AG04450 (cell line): ENCODE measurements at regions of chr14 and their contacts with region 1.

Region 1: GRCh38 chr14:24299255-24300195 is at the starts of genes DHRS1 and NOP9:
- DNase-seq: peak; percentile 54
- H3K4me3 ChIP-seq: peak within 1 kb of the TSS; percentile 96
- H3K27ac ChIP-seq: peak within 1 kb of the TSS; percentile 57
- H3K27me3 ChIP-seq: no peaks in the 10 kb centered on the region
- CTCF ChIP-seq: no peak
- polyA plus RNA-seq, gene DHRS1: 33.8 and 36.6 TPM in 2 replicates
- polyA plus RNA-seq, gene NOP9: 12.0 and 13.7 TPM in 2 replicates

Region 2: GRCh38 chr14:24058260-24058950 is 241.1 kb before region 1 on chr14:
- CTCF ChIA-PET with region 1: interaction called, 25 read pairs
- POLR2A ChIA-PET with region 1: no interaction called
- DNase-seq: peak; percentile 59
- H3K4me3 ChIP-seq: no peak overlapping the region
- H3K27ac ChIP-seq: no peak overlapping the region
- H3K27me3 ChIP-seq: peaks cover 36% of the 10 kb centered on the region
- CTCF ChIP-seq: peak; percentile 93

Region 3: DNA sequence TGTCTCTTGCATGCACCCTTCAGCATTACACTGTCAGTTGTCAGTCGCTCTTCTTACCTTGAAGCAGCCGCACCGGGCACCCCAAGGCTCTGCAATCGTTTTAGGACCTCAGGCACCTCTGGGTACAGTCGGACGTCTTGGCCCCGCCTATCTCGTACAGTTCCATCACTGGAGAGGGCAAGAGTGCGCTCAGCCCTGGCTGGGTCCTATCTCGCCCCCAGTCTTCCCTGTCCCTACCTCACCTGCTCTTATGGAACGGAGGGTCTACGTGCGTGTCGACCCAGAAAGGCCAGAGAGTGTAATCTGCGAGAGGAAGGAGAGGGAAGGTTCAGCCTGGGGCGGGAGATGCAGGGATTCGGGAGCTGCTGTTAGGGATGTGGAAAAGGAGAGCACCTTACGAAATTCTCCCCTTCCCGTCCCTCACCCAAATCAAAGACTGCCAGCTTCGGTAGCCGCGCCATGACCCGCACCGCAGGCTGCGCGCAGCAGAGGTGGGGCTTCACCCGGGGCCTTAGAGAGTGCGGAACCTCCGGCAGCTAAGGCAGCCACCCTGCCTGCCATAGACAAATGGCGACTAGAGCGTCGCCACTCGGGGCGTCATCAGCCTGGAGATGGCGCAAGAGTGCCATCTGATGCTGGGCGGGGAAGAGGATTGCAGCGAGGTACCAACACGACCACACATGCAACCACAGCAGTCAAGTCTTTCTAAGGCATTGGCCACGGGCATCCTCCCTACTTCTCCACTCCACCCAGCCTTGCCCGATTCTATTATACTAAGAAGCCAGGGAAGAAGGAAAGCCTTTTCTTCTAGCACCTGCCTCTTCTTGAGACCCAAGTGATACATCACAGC is 83.8 kb before region 1 on chr14 and contains the start of gene MDP1:
- CTCF ChIA-PET with region 1: interaction called, 15 read pairs
- POLR2A ChIA-PET with region 1: interaction called, 4 read pairs
- DNase-seq: peak; percentile 43
- H3K4me3 ChIP-seq: peak within 1 kb of the TSS; percentile 79
- H3K27ac ChIP-seq: peak within 1 kb of the TSS; percentile 84
- H3K27me3 ChIP-seq: no peaks in the 10 kb centered on the region
- CTCF ChIP-seq: peak; percentile 41
- polyA plus RNA-seq, gene MDP1: 14.9 and 16.1 TPM in 2 replicates

Region 4: GRCh38 chr14:24251880-24252288 is 47.6 kb before region 1 on chr14:
- CTCF ChIA-PET with region 1: interaction called, 14 read pairs
- POLR2A ChIA-PET with region 1: no interaction called
- DNase-seq: no peak
- H3K4me3 ChIP-seq: no peak overlapping the region
- H3K27ac ChIP-seq: peak overlapping the region; percentile 52
- H3K27me3 ChIP-seq: no peaks in the 10 kb centered on the region
- CTCF ChIP-seq: peak; percentile 16; the same call in 1 of the 2 replicates

Region 5: GRCh38 chr14:24310646-24311604 is 11.4 kb after region 1 on chr14 and contains the start of gene LTB4R:
- CTCF ChIA-PET with region 1: interaction called, 87 read pairs
- POLR2A ChIA-PET with region 1: no interaction called
- DNase-seq: no peak
- H3K4me3 ChIP-seq: peak within 1 kb of the TSS; percentile 20; the same call in 1 of the 2 replicates
- H3K27ac ChIP-seq: no peak within 1 kb of the TSS
- H3K27me3 ChIP-seq: peaks cover 2% of the 10 kb centered on the region
- CTCF ChIP-seq: peak; percentile 12; the same call in 1 of the 2 replicates
- polyA plus RNA-seq, gene LTB4R: 0.98 and 1.2 TPM in 2 replicates

Region 6: GRCh38 chr14:24351517-24351916 is 52.0 kb after region 1 on chr14:
- CTCF ChIA-PET with region 1: no interaction called
- POLR2A ChIA-PET with region 1: no interaction called
- DNase-seq: no peak
- H3K4me3 ChIP-seq: no peak overlapping the region
- H3K27ac ChIP-seq: no peak overlapping the region
- H3K27me3 ChIP-seq: peaks cover 32% of the 10 kb centered on the region
- CTCF ChIP-seq: no peak; the same call in 1 of the 2 replicates

Region 7: DNA sequence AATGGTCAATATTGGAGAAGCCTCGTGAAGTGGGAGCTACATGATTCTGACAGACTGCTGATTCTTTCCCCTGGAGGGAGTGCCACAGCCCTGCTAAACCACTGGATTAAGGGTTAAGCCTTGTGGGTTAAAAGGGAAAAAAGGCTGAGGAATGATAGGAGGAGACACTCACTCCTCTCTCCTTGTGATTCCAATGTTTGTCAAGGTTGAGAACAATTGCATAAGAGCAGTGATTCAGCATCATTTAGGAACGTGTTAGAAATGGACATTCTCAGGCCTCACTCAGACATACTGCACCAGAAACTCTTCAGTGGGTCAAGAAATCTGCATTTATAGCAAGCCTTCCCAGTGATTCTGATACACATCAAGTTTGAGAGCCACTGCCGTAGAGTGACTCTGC is 422.2 kb after region 1 on chr14:
- CTCF ChIA-PET with region 1: no interaction called
- POLR2A ChIA-PET with region 1: no interaction called
- DNase-seq: no peak
- H3K4me3 ChIP-seq: no peak overlapping the region
- H3K27ac ChIP-seq: no peak overlapping the region
- H3K27me3 ChIP-seq: no peaks in the 10 kb centered on the region
- CTCF ChIP-seq: no peak

Region 8: GRCh38 chr14:24784981-24785380 is 485.5 kb after region 1 on chr14:
- CTCF ChIA-PET with region 1: no interaction called
- POLR2A ChIA-PET with region 1: no interaction called
- DNase-seq: no peak
- H3K4me3 ChIP-seq: no peak overlapping the region
- H3K27ac ChIP-seq: no peak overlapping the region
- H3K27me3 ChIP-seq: no peaks in the 10 kb centered on the region
- CTCF ChIP-seq: no peak